Common myeloid progenitor, CD34-positive (primary cell): ENCODE measurements at regions of chr10 and their contacts with region 1.

Region 1: DNA sequence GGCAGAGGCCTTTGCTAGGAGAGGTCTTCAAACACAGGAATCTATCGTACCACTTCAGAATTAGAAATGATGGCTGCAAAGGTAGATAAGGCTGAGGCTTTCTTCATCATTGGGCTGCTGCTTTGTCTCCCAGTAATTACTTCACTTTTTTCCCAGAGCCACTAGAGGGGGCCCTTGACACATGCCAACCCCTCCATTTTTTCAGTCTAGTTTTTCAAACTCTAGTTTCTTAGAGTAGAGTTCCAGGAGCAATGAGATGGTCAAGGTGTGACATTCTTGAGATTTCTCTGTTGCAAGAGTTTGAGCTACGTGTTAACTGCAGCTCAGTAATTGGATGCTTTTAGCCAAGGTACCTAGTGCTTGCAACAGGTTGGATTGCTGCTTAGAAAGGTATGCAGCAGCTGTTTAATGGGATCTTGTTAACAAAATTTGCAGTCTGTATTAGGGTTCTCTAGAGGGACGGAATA is 33.8 kb upstream of the RBM20 start:
- DNase-seq: peak; percentile 56 to 75 (median 74)
- H3K4me3 ChIP-seq: no peak overlapping the region
- H3K27ac ChIP-seq: no peak overlapping the region
- H3K4me1 ChIP-seq: peaks cover 1 to 23% (median 5%) of the 10 kb centered on the region in 4 experiments
- H3K27me3 ChIP-seq: no peaks in the 10 kb centered on the region

Region 2: DNA sequence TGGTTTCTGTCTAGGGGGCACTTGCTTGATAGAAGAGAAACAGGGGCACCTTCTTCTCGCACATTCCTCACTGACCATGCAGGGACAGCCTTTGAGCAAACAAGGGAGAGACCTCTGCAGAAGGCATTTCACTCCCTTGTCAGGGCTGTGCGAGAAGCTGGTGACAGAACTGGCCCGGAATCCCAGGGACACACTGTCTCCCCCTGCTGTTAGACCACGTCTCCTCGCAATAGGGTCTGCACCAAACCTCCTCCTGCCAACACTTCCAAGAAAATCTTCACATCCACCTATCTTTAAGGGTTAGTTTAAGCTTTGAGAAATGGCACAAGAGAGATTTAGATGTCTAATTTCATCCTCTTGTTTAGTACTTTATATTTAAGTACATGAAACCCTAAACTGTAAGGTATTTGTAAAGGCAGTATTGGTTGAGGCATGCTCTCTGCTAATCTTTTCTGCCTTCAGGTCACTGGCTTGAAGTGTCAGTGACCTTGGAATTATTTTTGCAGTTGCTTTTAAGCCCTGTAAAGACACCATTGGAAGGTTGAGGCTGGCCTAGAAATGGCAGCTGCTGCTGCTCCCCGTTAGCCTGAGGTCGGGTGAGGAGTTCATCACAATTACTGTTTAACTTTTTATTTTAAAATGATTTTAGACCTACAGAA is 70.8 kb after region 1 on chr10:
- CTCF ChIA-PET with region 1: interaction called, 29 read pairs
- POLR2A ChIA-PET with region 1: interaction called, 4 read pairs
- DNase-seq: peak; percentile 37 to 63 (median 54)
- H3K4me3 ChIP-seq: no peak overlapping the region
- H3K27ac ChIP-seq: no peak overlapping the region
- H3K4me1 ChIP-seq: peaks cover 0 to 21% (median 15%) of the 10 kb centered on the region in 4 experiments
- H3K27me3 ChIP-seq: no peaks in the 10 kb centered on the region